Pancreas (tissue), 10 donors: ENCODE measurements at regions of chr11 and their contacts with region 1.

Region 1: GRCh38 chr11:45383224-45383623 is 97.1 kb upstream of the SYT13 start:
- DNase-seq: no peak
- ATAC-seq: peak in 1 of 4 donors; percentile 49
- H3K4me3 ChIP-seq: no peak overlapping the region
- H3K27ac ChIP-seq: no peak overlapping the region
- H3K4me1 ChIP-seq: no peaks in the 10 kb centered on the region
- H3K27me3 ChIP-seq: no peaks in the 10 kb centered on the region
- CTCF ChIP-seq: no peak

Region 2: GRCh38 chr11:45646275-45646970 is 263.2 kb after region 1 on chr11:
- intact Hi-C with region 1: loop called (anchors 10 kb)
- DNase-seq: peak in 1 of 6 donors; percentile 16
- ATAC-seq: peak in 1 of 4 donors; percentile 40
- H3K4me3 ChIP-seq: no peak overlapping the region
- H3K27ac ChIP-seq: no peak overlapping the region
- H3K4me1 ChIP-seq: no peaks in the 10 kb centered on the region
- H3K27me3 ChIP-seq: peaks cover 0 to 6% (median 0%) of the 10 kb centered on the region in 4 donors
- CTCF ChIP-seq: no peak

Region 3: GRCh38 chr11:45683271-45684058 is 300.2 kb after region 1 on chr11:
- intact Hi-C with region 1: no loop called
- DNase-seq: no peak
- ATAC-seq: no peak
- H3K4me3 ChIP-seq: no peak overlapping the region
- H3K27ac ChIP-seq: no peak overlapping the region
- H3K4me1 ChIP-seq: no peaks in the 10 kb centered on the region
- H3K27me3 ChIP-seq: no peaks in the 10 kb centered on the region
- CTCF ChIP-seq: no peak